ENCODE measurements at regions of chr17 and their contacts with region 1.

Region 1: GRCh38 chr17:4215882-4216570 is 47.8 kb downstream of the ANKFY1 start:
- DNase-seq: no peak
- H3K4me3 Mint-ChIP-seq: no peak overlapping the region
- H3K27ac Mint-ChIP-seq: no peak overlapping the region
- H3K4me1 Mint-ChIP-seq: peaks cover 6% of the 10 kb centered on the region
- H3K27me3 Mint-ChIP-seq: no peaks in the 10 kb centered on the region

Region 2: DNA sequence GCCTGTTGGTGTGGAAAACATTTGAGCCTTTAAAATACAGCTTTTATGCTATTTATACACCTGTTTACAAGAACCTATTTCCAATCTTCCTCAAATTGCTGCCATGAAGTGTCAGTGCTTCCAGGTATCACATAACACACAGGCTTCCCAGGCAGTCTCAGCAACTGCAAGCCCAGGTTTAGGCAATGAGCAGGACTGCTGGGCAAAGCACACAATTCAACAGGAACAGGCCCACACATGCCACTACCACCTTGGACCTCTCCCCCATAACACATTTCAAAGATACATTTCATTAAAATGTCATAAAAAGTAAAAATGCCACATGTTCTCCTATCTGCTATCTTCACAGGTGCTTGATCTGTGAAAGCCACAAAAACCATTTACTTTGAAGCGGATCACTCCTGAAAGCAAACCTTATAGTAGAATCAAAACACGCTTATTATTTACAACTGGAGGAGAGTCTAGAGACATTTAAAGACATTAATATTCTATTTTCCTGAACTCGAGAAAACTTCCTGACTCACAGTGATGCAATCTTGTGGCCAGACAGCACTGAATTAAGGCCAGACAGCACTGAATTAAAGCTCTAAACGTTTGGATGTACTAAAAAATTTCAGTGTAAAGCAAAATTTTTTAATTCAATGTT is 16.3 kb after region 1 on chr17:
- CTCF ChIA-PET with region 1: interaction called, 11 read pairs
- POLR2A ChIA-PET with region 1: no interaction called
- intact Hi-C with region 1: no loop called
- DNase-seq: no peak
- H3K4me3 Mint-ChIP-seq: no peak overlapping the region
- H3K27ac Mint-ChIP-seq: no peak overlapping the region
- H3K4me1 Mint-ChIP-seq: peaks cover 16% of the 10 kb centered on the region
- H3K27me3 Mint-ChIP-seq: no peaks in the 10 kb centered on the region

Region 3: GRCh38 chr17:4304417-4305027 is 88.5 kb after region 1 on chr17:
- CTCF ChIA-PET with region 1: interaction called, 11 read pairs
- POLR2A ChIA-PET with region 1: no interaction called
- intact Hi-C with region 1: loop called (anchors 5 kb)
- DNase-seq: peak; percentile 46
- H3K4me3 Mint-ChIP-seq: no peak overlapping the region
- H3K27ac Mint-ChIP-seq: no peak overlapping the region
- H3K4me1 Mint-ChIP-seq: peaks cover 17% of the 10 kb centered on the region
- H3K27me3 Mint-ChIP-seq: no peaks in the 10 kb centered on the region

Region 4: GRCh38 chr17:4412933-4413831 is 197.2 kb after region 1 on chr17:
- CTCF ChIA-PET with region 1: interaction called, 91 read pairs
- POLR2A ChIA-PET with region 1: no interaction called
- intact Hi-C with region 1: loop called (anchors 1 kb)
- DNase-seq: peak; percentile 95
- H3K4me3 Mint-ChIP-seq: peak overlapping the region; percentile 68
- H3K27ac Mint-ChIP-seq: peak overlapping the region; percentile 38
- H3K4me1 Mint-ChIP-seq: peaks cover 6% of the 10 kb centered on the region
- H3K27me3 Mint-ChIP-seq: no peaks in the 10 kb centered on the region

Region 5: GRCh38 chr17:4967539-4968165 is 751.6 kb after region 1 on chr17 and contains the start of gene SPAG7:
- CTCF ChIA-PET with region 1: no interaction called
- POLR2A ChIA-PET with region 1: no interaction called
- intact Hi-C with region 1: no loop called
- DNase-seq: peak; percentile 96
- H3K4me3 Mint-ChIP-seq: no peak within 1 kb of the TSS
- H3K27ac Mint-ChIP-seq: no peak within 1 kb of the TSS
- H3K4me1 Mint-ChIP-seq: peaks cover 37% of the 10 kb centered on the region
- H3K27me3 Mint-ChIP-seq: no peaks in the 10 kb centered on the region
- total RNA-seq, gene SPAG7: 60.6 to 65.8 TPM

Measured in activated CD4-positive, alpha-beta memory T cell treated with anti-CD3 and anti-CD28 coated beads for 36 hours (primary cell).